Natural killer cell (primary cell): ENCODE measurements at regions of chr17 and their contacts with region 1.

Region 1: DNA sequence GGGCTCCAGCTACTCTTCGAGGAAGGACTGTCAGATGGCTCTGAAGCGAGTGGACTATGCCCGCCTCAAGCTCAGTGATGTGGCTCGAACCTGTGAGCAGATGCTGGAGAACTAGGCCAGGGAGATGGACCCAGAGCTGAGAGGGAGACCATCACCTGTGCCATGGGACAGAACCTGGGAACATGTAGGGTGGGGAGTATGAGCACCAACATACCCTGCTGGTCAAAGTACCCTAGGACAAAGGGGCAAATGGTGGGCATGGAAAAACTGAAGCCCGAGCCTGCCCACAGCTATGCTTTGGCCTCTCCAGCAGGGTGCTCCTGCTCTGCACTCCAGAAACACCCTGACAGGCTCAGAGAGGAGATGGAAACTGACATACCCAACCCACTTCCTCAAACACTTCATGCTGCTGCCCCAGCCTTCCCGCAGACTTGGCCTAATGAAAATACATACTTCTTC is 1.9 kb downstream of the MED11 start:
- DNase-seq: no peak
- ATAC-seq: no peak
- H3K4me3 ChIP-seq: no peak overlapping the region
- H3K4me3 Mint-ChIP-seq: no peak overlapping the region
- H3K27ac ChIP-seq: no peak overlapping the region
- H3K27ac Mint-ChIP-seq: peak overlapping the region in 1 of 2 donors; percentile 38
- H3K4me1 ChIP-seq: peaks cover 36% of the 10 kb centered on the region
- H3K4me1 Mint-ChIP-seq: peaks cover 12 to 13% of the 10 kb centered on the region in 2 donors
- H3K27me3 ChIP-seq: no peaks in the 10 kb centered on the region
- H3K27me3 Mint-ChIP-seq: peaks cover 1 to 5% of the 10 kb centered on the region in 2 donors
- CTCF ChIP-seq: no peak

Region 2: GRCh38 chr17:4709794-4710692 is 23.1 kb before region 1 on chr17 and contains the start of gene ARRB2:
- intact Hi-C with region 1: loop called (anchors 1 kb)
- DNase-seq: peak; percentile 96 to 100
- ATAC-seq: peak; percentile 86 to 96 (median 87)
- H3K4me3 ChIP-seq: peak within 1 kb of the TSS; percentile 96
- H3K4me3 Mint-ChIP-seq: peak within 1 kb of the TSS; percentile 95
- H3K27ac ChIP-seq: peak within 1 kb of the TSS; percentile 88
- H3K27ac Mint-ChIP-seq: peak within 1 kb of the TSS; percentile 90 to 93
- H3K4me1 ChIP-seq: peaks cover 50% of the 10 kb centered on the region
- H3K4me1 Mint-ChIP-seq: peaks cover 43 to 52% of the 10 kb centered on the region in 2 donors
- H3K27me3 ChIP-seq: no peaks in the 10 kb centered on the region
- H3K27me3 Mint-ChIP-seq: no peaks in the 10 kb centered on the region
- CTCF ChIP-seq: peak; percentile 71
- total RNA-seq, gene ARRB2: 314 to 374 (median 335) TPM

Region 3: GRCh38 chr17:4782652-4783051 is 49.5 kb after region 1 on chr17:
- intact Hi-C with region 1: no loop called
- DNase-seq: peak in 1 of 2 donors; percentile 24
- ATAC-seq: no peak
- H3K4me3 ChIP-seq: no peak overlapping the region
- H3K4me3 Mint-ChIP-seq: no peak overlapping the region
- H3K27ac ChIP-seq: no peak overlapping the region
- H3K27ac Mint-ChIP-seq: no peak overlapping the region
- H3K4me1 ChIP-seq: peaks cover 15% of the 10 kb centered on the region
- H3K4me1 Mint-ChIP-seq: peaks cover 5% of the 10 kb centered on the region in 2 donors
- H3K27me3 ChIP-seq: peaks cover 36% of the 10 kb centered on the region
- H3K27me3 Mint-ChIP-seq: peaks cover 41 to 47% of the 10 kb centered on the region in 2 donors
- CTCF ChIP-seq: no peak